ENCODE measurements at regions of chrX and their contacts with region 1.

Region 1: GRCh38 chrX:45050558-45050957 is 150.1 kb downstream of the DIPK2B start:
- DNase-seq: no peak
- H3K4me3 ChIP-seq: no peak overlapping the region
- H3K27ac ChIP-seq: no peak overlapping the region
- H3K4me1 ChIP-seq: no peaks in the 10 kb centered on the region
- H3K27me3 ChIP-seq: no peaks in the 10 kb centered on the region
- CTCF ChIP-seq: no peak

Region 2: DNA sequence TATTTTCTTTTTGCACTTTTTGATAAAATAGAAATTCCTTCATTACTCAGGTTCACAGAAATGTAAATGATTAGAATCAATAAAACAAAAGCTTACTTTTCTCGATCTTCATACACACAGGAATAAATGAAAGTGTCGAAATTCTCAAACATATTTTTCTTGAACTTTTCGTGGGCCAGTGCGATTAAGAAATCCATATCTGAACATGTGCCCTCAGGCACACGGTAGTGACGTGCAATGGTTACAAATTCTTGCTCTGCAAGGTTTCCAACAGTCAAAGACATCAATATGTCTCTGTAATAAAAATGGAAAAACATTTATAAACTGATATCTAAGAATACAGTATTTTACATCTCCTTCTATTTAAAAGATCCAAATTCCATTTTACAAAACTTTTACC is 872.3 kb before region 1 on chrX:
- intact Hi-C with region 1: loop called (anchors 5 kb)
- DNase-seq: no peak
- H3K4me3 ChIP-seq: no peak overlapping the region
- H3K27ac ChIP-seq: no peak overlapping the region
- H3K4me1 ChIP-seq: no peaks in the 10 kb centered on the region
- H3K27me3 ChIP-seq: no peaks in the 10 kb centered on the region
- CTCF ChIP-seq: no peak

Region 3: DNA sequence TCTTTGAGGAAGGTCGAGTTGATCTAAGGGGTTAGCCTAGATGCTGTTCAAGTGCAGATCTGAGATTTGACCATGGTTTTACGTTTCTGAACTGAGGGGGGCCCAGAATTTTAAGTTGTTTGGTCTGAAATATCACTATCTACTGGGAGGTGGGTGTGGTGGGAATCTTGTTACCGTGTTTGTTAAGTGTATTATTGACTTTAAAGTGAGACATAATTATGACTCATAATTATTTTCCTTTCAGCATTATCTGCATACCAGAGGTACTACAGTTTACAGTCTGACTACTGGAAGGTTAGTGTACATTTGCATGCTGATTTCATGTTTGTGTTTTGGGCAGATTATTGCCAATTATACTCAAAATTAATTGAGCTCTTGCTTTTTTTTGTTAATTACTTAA is 76.1 kb before region 1 on chrX:
- intact Hi-C with region 1: no loop called
- DNase-seq: no peak
- H3K4me3 ChIP-seq: no peak overlapping the region
- H3K27ac ChIP-seq: no peak overlapping the region
- H3K4me1 ChIP-seq: no peaks in the 10 kb centered on the region
- H3K27me3 ChIP-seq: no peaks in the 10 kb centered on the region
- CTCF ChIP-seq: no peak